ENCODE measurements at regions of chr14 and their contacts with region 1.

Region 1: GRCh38 chr14:50778721-50779483 is 52.1 kb downstream of the NIN start:
- DNase-seq: no peak
- H3K4me3 ChIP-seq: no peak overlapping the region
- H3K27ac ChIP-seq: peak overlapping the region; percentile 6 to 44
- H3K4me1 ChIP-seq: peaks cover 0 to 21% of the 10 kb centered on the region in 2 experiments; a peak in 3 of 4 replicates
- H3K27me3 ChIP-seq: no peaks in the 10 kb centered on the region
- CTCF ChIP-seq: no peak
- EP300 ChIP-seq: no peak
- RAD21 ChIP-seq: no peak

Region 2: GRCh38 chr14:50542941-50543418 is 235.9 kb before region 1 on chr14:
- CTCF ChIA-PET with region 1: interaction called, 37 read pairs
- POLR2A ChIA-PET with region 1: no interaction called
- DNase-seq: peak; percentile 51
- H3K4me3 ChIP-seq: no peak overlapping the region; a peak in 1 of 4 replicates
- H3K27ac ChIP-seq: peak overlapping the region in 1 of 2 experiments; percentile 48; a peak in 2 of 4 replicates
- H3K4me1 ChIP-seq: no peaks in the 10 kb centered on the region; a peak in 1 of 4 replicates
- H3K27me3 ChIP-seq: no peaks in the 10 kb centered on the region
- CTCF ChIP-seq: peak; percentile 68
- EP300 ChIP-seq: peak in 1 of 2 experiments; percentile 73; a peak in 1 of 4 replicates
- RAD21 ChIP-seq: peak; percentile 62

Region 3: DNA sequence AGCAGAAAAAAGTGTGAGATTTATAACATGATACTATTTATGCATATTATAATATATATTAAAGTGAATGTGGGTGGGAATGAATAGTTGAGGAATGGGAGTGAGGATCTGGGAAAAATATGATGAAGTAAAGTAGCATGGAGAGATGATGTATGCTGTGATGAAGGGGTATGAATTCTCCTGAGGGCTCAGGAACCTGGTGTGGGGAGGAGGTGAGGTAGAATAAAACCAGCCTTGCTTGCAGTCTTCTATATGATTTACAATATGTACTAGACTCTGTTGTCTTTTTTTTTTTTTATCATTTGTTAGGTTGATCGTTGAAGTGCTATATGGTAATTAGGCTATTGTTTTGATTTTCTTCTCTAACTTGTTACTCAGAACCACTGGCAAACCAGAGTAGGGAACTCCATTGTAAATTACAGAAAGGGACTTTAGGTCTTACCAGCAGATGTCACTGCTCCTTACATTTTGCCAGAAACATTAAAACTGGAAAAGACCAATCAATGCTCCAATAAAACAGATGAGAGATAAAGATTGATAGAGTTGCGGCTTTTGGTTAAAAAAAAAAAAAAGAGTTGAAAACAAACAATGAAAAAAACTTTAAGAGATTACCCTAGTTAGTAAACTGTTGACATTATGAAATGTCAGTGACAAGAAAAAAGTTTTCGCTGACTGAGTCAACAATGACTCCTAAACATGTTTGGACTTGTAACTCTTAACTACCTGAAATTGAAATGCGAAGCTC is 179.0 kb before region 1 on chr14:
- CTCF ChIA-PET with region 1: interaction called, 23 read pairs
- POLR2A ChIA-PET with region 1: no interaction called
- DNase-seq: peak; percentile 13
- H3K4me3 ChIP-seq: no peak overlapping the region
- H3K27ac ChIP-seq: peak overlapping the region in 1 of 2 experiments; percentile 11; a peak in 2 of 4 replicates
- H3K4me1 ChIP-seq: peaks cover 4 to 15% of the 10 kb centered on the region in 2 experiments; a peak in 3 of 4 replicates
- H3K27me3 ChIP-seq: no peaks in the 10 kb centered on the region
- CTCF ChIP-seq: peak; percentile 73
- EP300 ChIP-seq: no peak
- RAD21 ChIP-seq: peak; percentile 74

Region 4: DNA sequence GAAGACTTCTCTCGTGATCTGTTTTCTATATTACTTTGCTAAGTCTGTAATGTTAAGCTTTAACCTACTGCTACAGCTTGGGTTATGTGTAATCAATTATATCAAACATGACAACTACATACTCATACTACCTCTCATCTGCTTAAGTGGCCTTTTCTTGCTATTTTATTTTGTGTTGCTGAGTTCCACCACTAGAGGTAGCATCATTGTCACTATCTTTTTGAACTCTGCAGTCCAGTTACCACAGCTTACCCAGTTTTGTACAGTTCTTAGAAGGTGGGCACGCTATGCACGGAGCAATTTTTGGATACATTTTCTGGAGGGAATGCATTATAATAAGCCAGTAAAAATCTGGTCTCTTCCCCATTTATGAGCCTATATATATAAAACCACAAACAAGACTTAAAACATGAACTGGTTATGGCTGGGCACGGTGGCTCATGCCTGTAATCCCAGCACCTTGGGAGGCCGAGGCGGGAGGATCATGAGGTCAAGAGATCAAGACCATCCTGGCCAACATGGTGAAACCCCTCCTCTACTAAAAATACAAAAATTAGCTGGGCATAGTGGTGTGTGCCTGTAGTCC is 159.3 kb before region 1 on chr14:
- CTCF ChIA-PET with region 1: interaction called, 50 read pairs
- POLR2A ChIA-PET with region 1: no interaction called
- DNase-seq: peak; percentile 27
- H3K4me3 ChIP-seq: no peak overlapping the region
- H3K27ac ChIP-seq: peak overlapping the region in 1 of 2 experiments; percentile 3; a peak in 1 of 4 replicates
- H3K4me1 ChIP-seq: peaks cover 0 to 11% of the 10 kb centered on the region in 2 experiments; a peak in 1 of 4 replicates
- H3K27me3 ChIP-seq: no peaks in the 10 kb centered on the region
- CTCF ChIP-seq: peak; percentile 73
- EP300 ChIP-seq: no peak
- RAD21 ChIP-seq: peak; percentile 69

Region 5: DNA sequence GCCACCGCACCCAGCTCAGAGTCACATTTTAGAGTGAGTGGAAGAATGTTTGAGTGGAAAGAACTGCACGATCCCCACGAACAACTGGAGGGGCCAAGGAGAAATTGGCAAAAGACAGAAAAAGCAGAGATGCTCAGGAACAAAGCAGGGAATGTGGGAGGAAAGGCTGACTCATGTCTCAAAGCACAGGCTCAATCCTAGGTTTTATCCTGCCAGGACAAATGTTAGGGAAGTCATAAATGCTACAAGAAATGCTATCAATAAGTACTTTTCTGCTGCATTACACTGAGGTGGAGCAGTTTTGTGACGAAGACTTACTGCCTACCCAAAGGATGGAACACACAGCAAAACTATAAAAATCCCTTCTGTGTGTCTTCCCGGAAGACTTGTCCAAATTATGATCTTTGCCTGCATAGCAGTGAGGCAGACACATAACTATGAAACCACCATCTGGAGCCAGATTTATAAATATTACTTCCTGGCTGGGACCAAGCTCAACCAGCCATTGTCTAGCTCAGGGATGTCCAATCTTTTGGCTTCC is 25.3 kb after region 1 on chr14:
- CTCF ChIA-PET with region 1: interaction called, 14 read pairs
- POLR2A ChIA-PET with region 1: no interaction called
- DNase-seq: no peak
- H3K4me3 ChIP-seq: no peak overlapping the region
- H3K27ac ChIP-seq: peak overlapping the region; percentile 67 to 87; a peak in 3 of 4 replicates
- H3K4me1 ChIP-seq: peaks cover 0 to 43% of the 10 kb centered on the region in 2 experiments; a peak in 3 of 4 replicates
- H3K27me3 ChIP-seq: no peaks in the 10 kb centered on the region
- CTCF ChIP-seq: no peak
- EP300 ChIP-seq: 0 out of 4 replicates have a peak, but pooled peaks of 1 of the 2 experiments have one; percentile 5
- RAD21 ChIP-seq: no peak

Measured in SK-N-SH (cell line).